ENCODE measurements at regions of chr5 and their contacts with region 1.

Region 1: DNA sequence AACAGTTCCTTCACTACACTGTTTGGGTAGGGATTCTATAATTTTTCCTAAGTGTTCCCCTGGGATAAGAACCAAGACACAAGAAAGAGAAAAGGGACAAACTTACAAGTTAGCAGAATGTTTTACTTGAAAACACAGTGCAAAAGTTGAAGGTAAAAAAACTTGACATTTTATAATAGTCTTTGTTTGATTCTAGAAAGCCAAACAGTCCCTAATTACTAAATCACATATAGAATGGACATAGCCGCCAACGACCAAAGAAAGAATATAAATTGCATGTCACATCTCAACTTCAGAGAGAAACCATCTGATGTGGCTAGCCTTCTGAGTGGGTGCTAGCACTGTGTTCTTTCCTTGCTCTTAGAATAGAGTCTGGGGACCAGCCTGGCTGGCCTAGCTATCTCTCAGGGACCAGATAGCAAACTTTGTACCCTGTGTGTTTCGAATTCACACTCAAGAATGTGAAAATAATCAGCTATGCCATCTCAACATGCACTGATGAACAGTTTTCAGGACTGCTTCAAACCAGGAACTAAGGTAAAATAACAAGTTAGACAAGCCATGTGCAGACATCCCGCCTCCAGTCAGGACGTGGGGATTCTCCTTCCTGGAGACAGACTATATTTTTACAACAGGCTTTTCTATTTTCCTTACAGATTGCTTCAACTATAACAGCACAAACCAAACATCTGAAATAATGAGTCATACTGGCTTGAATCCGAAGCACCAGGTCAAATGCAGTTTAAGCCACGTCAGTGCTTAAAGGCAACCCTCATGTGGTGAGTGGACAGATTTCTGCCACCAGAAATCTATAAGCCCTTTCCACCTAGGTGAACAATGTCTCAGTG is 53.7 kb downstream of the LHFPL2 start:
- DNase-seq: peak; percentile 93
- ATAC-seq: peak; percentile 66
- H3K4me3 ChIP-seq: no peak overlapping the region
- H3K27ac ChIP-seq: peak overlapping the region; percentile 99
- H3K4me1 ChIP-seq: peaks cover 87% of the 10 kb centered on the region
- H3K27me3 ChIP-seq: no peaks in the 10 kb centered on the region
- CTCF ChIP-seq: no peak

Region 2: GRCh38 chr5:78509884-78510769 is 84.7 kb before region 1 on chr5:
- CTCF ChIA-PET with region 1: no interaction called
- POLR2A ChIA-PET with region 1: no interaction called
- intact Hi-C with region 1: loop called (anchors 5 kb)
- DNase-seq: peak; percentile 55
- ATAC-seq: peak; percentile 53
- H3K4me3 ChIP-seq: peak overlapping the region; percentile 65
- H3K27ac ChIP-seq: peak overlapping the region; percentile 96
- H3K4me1 ChIP-seq: peaks cover 72% of the 10 kb centered on the region
- H3K27me3 ChIP-seq: no peaks in the 10 kb centered on the region
- CTCF ChIP-seq: peak; percentile 38; the same call in 1 of the 2 replicates

Region 3: DNA sequence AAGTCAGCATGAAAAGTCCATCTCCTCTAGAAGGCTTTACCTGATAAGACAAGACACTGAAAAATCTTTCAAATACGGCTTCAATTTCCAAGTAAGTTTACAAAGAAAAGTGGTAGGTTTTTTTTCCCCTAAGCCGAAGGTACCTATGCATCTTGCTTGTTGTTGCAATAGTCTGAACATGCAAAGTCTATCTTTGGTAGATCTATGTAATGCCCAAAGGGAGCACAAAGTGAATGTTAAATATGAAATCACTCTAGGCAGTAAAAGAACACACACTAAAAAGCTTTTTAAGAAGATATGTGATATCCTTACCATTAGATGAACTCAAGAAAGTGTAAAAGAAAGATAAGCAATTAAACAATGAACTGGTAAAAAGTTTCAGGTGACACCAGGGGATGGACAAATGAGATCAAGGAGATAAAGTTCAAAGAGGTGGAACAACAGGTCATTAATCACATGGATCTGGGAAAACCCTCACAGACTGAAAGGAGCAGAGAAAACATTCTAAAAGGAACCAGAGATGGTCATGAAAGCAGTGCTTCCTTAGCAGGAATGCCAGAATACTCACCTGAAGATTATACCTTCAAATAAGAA is 12.9 kb after region 1 on chr5:
- CTCF ChIA-PET with region 1: no interaction called
- POLR2A ChIA-PET with region 1: interaction called, 18 read pairs
- intact Hi-C with region 1: no loop called
- DNase-seq: no peak
- ATAC-seq: no peak
- H3K4me3 ChIP-seq: no peak overlapping the region
- H3K27ac ChIP-seq: no peak overlapping the region
- H3K4me1 ChIP-seq: peaks cover 34% of the 10 kb centered on the region
- H3K27me3 ChIP-seq: no peaks in the 10 kb centered on the region
- CTCF ChIP-seq: no peak

Region 4: GRCh38 chr5:78638423-78638822 is 43.6 kb after region 1 on chr5:
- CTCF ChIA-PET with region 1: no interaction called
- POLR2A ChIA-PET with region 1: no interaction called
- intact Hi-C with region 1: loop called (anchors 1 kb)
- DNase-seq: peak; percentile 95
- ATAC-seq: peak; percentile 92
- H3K4me3 ChIP-seq: no peak overlapping the region
- H3K27ac ChIP-seq: peak overlapping the region; percentile 87
- H3K4me1 ChIP-seq: peaks cover 56% of the 10 kb centered on the region
- H3K27me3 ChIP-seq: no peaks in the 10 kb centered on the region
- CTCF ChIP-seq: no peak

Measured in PC-3 (cell line).